Right lobe of liver (tissue), 6 donors: ENCODE measurements at regions of chr1 and their contacts with region 1.

Region 1: GRCh38 chr1:200971955-200972711 is 51.4 kb downstream of the KIF21B start:
- DNase-seq: peak in 2 of 3 donors; percentile 64 to 68
- ATAC-seq: peak; percentile 20 to 76 (median 66)
- H3K4me3 ChIP-seq: no peak overlapping the region
- H3K27ac ChIP-seq: no peak overlapping the region
- H3K4me1 ChIP-seq: no peaks in the 10 kb centered on the region
- H3K27me3 ChIP-seq: no peaks in the 10 kb centered on the region
- CTCF ChIP-seq: peak; percentile 57 to 96 (median 90)
- POLR2A ChIP-seq: no peak

Region 2: GRCh38 chr1:201042779-201043461 is 70.8 kb after region 1 on chr1:
- intact Hi-C with region 1: loop called (anchors 5 kb)
- DNase-seq: peak; percentile 51 to 67 (median 62)
- ATAC-seq: peak; percentile 81 to 94 (median 88)
- H3K4me3 ChIP-seq: no peak overlapping the region
- H3K27ac ChIP-seq: no peak overlapping the region
- H3K4me1 ChIP-seq: no peaks in the 10 kb centered on the region
- H3K27me3 ChIP-seq: no peaks in the 10 kb centered on the region
- CTCF ChIP-seq: peak; percentile 86 to 93 (median 93)
- POLR2A ChIP-seq: no peak

Region 3: GRCh38 chr1:201104141-201104540 is 132.0 kb after region 1 on chr1:
- intact Hi-C with region 1: no loop called
- DNase-seq: no peak
- ATAC-seq: no peak
- H3K4me3 ChIP-seq: no peak overlapping the region
- H3K27ac ChIP-seq: no peak overlapping the region
- H3K4me1 ChIP-seq: no peaks in the 10 kb centered on the region
- H3K27me3 ChIP-seq: no peaks in the 10 kb centered on the region
- CTCF ChIP-seq: no peak
- POLR2A ChIP-seq: no peak

Region 4: DNA sequence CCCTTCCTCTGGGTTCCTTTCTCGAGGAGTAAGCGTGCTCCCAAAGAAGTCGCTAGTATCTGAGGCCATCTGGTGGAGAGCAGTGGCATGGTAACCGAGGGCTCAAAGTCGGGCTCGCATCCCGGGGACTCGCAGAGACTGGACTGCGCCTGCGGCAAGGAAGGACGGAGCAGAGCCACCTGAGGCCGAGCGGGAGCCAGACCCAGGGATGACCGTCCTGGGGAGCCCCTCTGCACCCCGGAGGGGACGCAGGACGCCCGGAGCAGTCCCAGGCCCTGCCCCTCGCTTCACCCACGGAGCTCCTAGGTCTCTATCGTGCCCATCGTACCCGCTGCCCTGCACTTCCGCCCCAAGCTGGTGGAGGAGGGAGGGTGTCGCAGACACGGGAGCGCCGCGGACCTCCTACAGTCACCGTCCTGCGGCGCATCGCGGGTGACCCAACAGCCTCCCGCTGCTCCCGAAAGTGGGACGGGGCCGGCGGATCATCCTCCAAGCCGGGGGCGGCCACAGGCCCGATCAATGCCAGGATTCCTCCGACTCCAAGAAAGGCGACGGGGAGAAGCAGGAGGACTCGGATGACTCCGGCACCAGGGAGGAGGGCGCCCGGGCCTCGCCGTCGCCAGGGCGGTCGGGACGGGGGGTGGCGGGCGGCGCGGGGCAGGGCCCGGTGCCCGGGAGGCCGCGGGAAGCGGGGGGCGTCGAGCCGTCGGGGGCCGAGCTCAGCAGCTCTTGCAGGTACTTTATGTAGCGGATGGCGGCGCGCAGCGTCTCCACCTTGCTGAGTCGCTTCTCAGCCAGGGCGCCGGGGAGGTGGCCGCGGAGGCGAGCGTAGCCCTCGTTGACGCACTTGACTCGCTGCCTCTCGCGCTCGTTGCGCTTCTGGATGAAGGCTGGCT is 142.4 kb after region 1 on chr1:
- intact Hi-C with region 1: loop called (anchors 5 to 10 kb)
- DNase-seq: peak; percentile 83 to 86 (median 84)
- ATAC-seq: peak; percentile 97 to 99 (median 98)
- H3K4me3 ChIP-seq: peak overlapping the region; percentile 49 to 57 (median 51)
- H3K27ac ChIP-seq: no peak overlapping the region
- H3K4me1 ChIP-seq: no peaks in the 10 kb centered on the region
- H3K27me3 ChIP-seq: no peaks in the 10 kb centered on the region
- CTCF ChIP-seq: peak; percentile 77 to 83 (median 80)
- POLR2A ChIP-seq: no peak